Activated CD8-positive, alpha-beta memory T cell treated with anti-CD3 and anti-CD28 coated beads, Interleukin-2, amount 10 ng/mL, durations not matched to agents 7 days and 5 days (primary cell): ENCODE measurements at regions of chr1 and their contacts with region 1.

Region 1: GRCh38 chr1:92310185-92310597 is 11.3 kb downstream of the RPAP2 start:
- DNase-seq: no peak
- ATAC-seq: peak; percentile 48
- H3K4me3 Mint-ChIP-seq: no peak overlapping the region
- H3K27ac Mint-ChIP-seq: no peak overlapping the region
- H3K4me1 Mint-ChIP-seq: peaks cover 45% of the 10 kb centered on the region
- H3K27me3 Mint-ChIP-seq: no peaks in the 10 kb centered on the region

Region 2: GRCh38 chr1:92298573-92299476 is 11.4 kb before region 1 on chr1 and contains the starts of genes GLMN and RPAP2:
- CTCF ChIA-PET with region 1: interaction called, 16 read pairs
- DNase-seq: peak; percentile 81
- ATAC-seq: peak; percentile 98
- H3K4me3 Mint-ChIP-seq: peak within 1 kb of the TSS; percentile 90
- H3K27ac Mint-ChIP-seq: peak within 1 kb of the TSS; percentile 95
- H3K4me1 Mint-ChIP-seq: peaks cover 49% of the 10 kb centered on the region
- H3K27me3 Mint-ChIP-seq: no peaks in the 10 kb centered on the region
- total RNA-seq, gene GLMN: 25.7 to 26.0 TPM
- total RNA-seq, gene RPAP2: 37.1 to 41.4 TPM

Region 3: GRCh38 chr1:92367496-92367895 is 57.3 kb after region 1 on chr1:
- CTCF ChIA-PET with region 1: interaction called, 20 read pairs
- DNase-seq: peak; percentile 51
- ATAC-seq: peak; percentile 49
- H3K4me3 Mint-ChIP-seq: peak overlapping the region; percentile 33
- H3K27ac Mint-ChIP-seq: peak overlapping the region; percentile 91
- H3K4me1 Mint-ChIP-seq: peaks cover 57% of the 10 kb centered on the region
- H3K27me3 Mint-ChIP-seq: no peaks in the 10 kb centered on the region

Region 4: DNA sequence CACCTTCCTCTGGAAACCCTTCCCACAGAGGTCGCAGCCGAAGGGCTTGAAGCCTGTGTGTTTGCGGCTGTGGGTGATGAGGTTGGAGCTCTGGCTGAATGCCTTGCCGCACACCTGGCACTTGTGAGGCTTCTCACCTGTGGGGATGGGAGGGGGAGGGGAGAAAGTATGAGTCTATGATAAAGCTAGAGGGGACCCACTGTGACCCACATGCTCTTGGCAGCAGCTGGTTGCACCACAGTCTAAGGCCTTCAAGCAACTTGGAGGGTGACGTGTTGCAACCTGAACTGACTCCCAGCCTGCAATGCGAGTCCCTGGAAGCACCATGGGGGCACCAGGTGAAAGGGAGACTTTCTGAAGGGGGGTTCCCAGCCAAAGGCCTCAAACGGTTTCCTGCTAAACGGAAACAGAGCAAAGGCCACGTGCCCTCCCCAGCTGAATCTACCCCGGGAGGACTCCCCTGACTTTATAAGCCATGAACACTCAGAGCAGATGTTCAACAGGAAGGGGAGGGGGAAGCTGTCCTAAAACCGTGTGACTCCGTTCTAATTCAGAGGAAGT is 166.0 kb after region 1 on chr1:
- CTCF ChIA-PET with region 1: interaction called, 296 read pairs
- DNase-seq: peak; percentile 86
- ATAC-seq: peak; percentile 62
- H3K4me3 Mint-ChIP-seq: peak overlapping the region; percentile 31
- H3K27ac Mint-ChIP-seq: peak overlapping the region; percentile 81
- H3K4me1 Mint-ChIP-seq: peaks cover 87% of the 10 kb centered on the region
- H3K27me3 Mint-ChIP-seq: no peaks in the 10 kb centered on the region

Region 5: GRCh38 chr1:92485381-92486257 is 175.4 kb after region 1 on chr1:
- CTCF ChIA-PET with region 1: interaction called, 296 read pairs
- DNase-seq: peak; percentile 95
- ATAC-seq: peak; percentile 58
- H3K4me3 Mint-ChIP-seq: peak overlapping the region; percentile 95
- H3K27ac Mint-ChIP-seq: peak overlapping the region; percentile 94
- H3K4me1 Mint-ChIP-seq: peaks cover 32% of the 10 kb centered on the region
- H3K27me3 Mint-ChIP-seq: no peaks in the 10 kb centered on the region

Region 6: DNA sequence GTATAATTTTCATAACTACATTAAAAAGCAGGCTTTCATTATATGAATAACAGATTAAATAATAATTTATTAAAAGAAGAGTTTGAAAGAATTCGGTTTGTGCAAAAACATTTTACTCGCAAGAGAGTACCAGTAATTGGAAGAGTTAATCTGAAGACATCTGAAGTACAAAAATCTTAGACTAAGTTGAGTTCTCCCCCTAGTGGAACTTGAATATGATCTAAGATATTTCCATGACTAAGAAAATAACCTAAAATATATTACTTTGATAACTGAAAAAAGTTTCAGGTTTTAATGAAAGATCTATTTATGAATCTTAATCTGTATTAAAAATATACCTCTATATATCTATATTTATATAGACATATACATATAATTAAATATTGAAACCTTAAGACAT is 289.0 kb after region 1 on chr1:
- CTCF ChIA-PET with region 1: interaction called, 14 read pairs
- DNase-seq: no peak
- ATAC-seq: peak; percentile 55
- H3K4me3 Mint-ChIP-seq: no peak overlapping the region
- H3K27ac Mint-ChIP-seq: no peak overlapping the region
- H3K4me1 Mint-ChIP-seq: peaks cover 17% of the 10 kb centered on the region
- H3K27me3 Mint-ChIP-seq: no peaks in the 10 kb centered on the region